ENCODE measurements at regions of chr1 and their contacts with region 1.

Region 1: GRCh38 chr1:232923739-232924386 is 26.5 kb upstream of the NTPCR start:
- DNase-seq: peak; percentile 90
- H3K4me3 Mint-ChIP-seq: peak overlapping the region; percentile 66
- H3K27ac Mint-ChIP-seq: peak overlapping the region; percentile 92
- H3K4me1 Mint-ChIP-seq: peaks cover 28% of the 10 kb centered on the region
- H3K27me3 Mint-ChIP-seq: no peaks in the 10 kb centered on the region

Region 2: DNA sequence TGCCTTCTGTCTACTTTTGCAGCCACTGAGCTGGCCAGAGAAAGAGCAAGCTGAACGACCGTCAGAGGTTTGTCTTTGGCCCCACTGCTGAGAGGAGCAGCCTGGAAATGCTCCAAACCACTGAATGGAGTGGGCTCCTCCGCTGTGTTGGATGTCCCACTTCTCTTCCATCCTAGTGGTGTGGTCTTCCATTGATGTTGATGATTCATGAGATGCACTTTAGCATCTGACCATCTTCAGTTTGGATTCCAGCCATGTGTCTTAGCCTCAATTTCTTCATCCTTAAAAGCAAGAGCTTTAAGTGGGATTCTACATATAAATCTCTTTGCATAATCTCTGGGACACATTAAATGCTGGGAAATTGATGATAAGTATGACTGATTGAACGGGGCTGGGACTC is 570.9 kb before region 1 on chr1:
- intact Hi-C with region 1: no loop called
- DNase-seq: no peak
- H3K4me3 Mint-ChIP-seq: no peak overlapping the region
- H3K27ac Mint-ChIP-seq: no peak overlapping the region
- H3K4me1 Mint-ChIP-seq: no peaks in the 10 kb centered on the region
- H3K27me3 Mint-ChIP-seq: no peaks in the 10 kb centered on the region

Region 3: GRCh38 chr1:232805269-232806185 is 118.3 kb before region 1 on chr1 and contains the start of gene MAP10:
- intact Hi-C with region 1: loop called (anchors 10 kb)
- DNase-seq: peak; percentile 94
- H3K4me3 Mint-ChIP-seq: peak within 1 kb of the TSS; percentile 91
- H3K27ac Mint-ChIP-seq: peak within 1 kb of the TSS; percentile 86
- H3K4me1 Mint-ChIP-seq: peaks cover 27% of the 10 kb centered on the region
- H3K27me3 Mint-ChIP-seq: peaks cover 10% of the 10 kb centered on the region
- total RNA-seq, gene MAP10: 2.6 and 2.7 TPM in 2 replicates

Region 4: DNA sequence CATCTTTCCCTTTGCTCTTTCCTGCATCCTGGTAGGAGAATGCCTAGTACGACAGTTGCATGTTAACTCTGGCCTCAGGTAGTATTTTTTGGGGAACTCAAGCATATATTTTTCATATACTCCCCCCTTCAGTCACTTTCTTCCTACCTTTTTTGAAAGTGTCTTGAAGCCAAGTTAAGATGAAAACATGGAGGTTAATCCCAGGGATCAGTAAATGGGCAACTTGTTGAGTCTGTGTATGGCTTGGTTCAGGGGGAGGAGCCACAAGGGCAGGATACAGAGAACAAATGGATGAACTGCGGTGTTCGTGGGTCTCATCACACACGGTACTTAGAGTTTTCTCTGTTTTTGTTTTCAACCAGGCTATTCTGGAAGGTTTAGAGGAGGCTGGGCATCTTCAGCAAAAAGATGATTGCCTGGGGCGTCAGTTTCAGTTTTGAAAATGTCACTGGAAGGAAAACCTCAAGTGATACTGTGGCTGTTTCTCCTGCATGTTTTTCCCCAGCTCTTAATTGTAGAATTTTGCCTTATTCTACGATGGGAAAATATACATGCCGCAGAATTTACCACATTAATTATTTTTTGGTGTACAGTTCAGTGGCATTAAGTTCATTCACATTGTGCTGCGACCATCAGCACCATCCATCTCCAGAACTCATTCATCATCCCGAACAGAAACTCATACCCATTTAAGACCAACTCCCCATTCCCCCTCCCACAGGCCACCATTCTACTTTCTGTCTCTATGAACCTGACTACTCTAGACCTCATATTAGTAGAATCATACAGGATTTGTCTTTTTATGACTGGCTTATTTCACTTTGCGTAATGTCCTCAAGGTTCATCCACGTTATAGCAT is 47.1 kb before region 1 on chr1:
- intact Hi-C with region 1: loop called (anchors 2 kb)
- DNase-seq: no peak
- H3K4me3 Mint-ChIP-seq: peak overlapping the region; percentile 2
- H3K27ac Mint-ChIP-seq: peak overlapping the region; percentile 43
- H3K4me1 Mint-ChIP-seq: peaks cover 11% of the 10 kb centered on the region
- H3K27me3 Mint-ChIP-seq: no peaks in the 10 kb centered on the region

Measured in activated CD4-positive, alpha-beta T cell treated with anti-CD3 and anti-CD28 coated beads, Interleukin-2, amount 10 ng/mL, durations not matched to agents 24 days and 14 days (primary cell).